ENCODE measurements at regions of chr9 and their contacts with region 1.

Region 1: DNA sequence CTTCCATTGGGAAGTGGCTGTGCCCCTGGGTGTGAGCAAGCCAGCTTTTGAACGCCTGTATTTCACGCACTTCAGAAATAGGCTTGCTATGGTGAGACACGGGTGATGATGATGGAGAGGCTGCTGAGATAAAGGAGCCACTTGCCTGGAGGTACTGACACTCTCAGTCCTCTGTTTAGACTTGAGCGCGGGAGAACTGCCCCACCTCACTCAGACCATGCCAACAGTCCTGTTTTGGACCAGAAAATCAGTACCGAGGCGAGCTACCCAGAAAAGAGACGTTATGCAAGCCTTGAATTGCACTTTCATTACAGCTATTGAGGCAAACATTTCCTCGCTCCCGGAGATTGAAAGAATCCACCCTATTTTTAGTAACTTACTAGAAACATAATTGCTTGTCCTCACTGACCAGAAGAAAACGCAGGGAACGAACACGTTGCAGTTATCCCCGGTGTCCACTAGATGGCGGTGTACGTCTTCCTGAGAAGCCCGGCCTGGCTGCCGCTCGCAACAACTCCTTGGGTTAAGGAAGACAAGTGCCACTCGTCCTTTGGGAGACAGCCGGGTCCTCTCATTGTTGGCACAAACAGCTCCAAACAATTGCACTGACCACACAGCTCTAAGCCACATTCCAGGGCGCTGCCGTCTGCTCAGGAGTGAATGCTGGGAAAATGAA is 142.4 kb downstream of the PSAT1 start:
- DNase-seq: peak; percentile 45 to 56 (median 51)
- H3K4me3 ChIP-seq: no peak overlapping the region
- H3K4me3 Mint-ChIP-seq: peak overlapping the region in 2 of 8 donors; percentile 5 to 22
- H3K27ac ChIP-seq: no peak overlapping the region
- H3K27ac Mint-ChIP-seq: peak overlapping the region in 1 of 7 donors; percentile 44
- H3K4me1 ChIP-seq: peaks cover 5% of the 10 kb centered on the region
- H3K4me1 Mint-ChIP-seq: peaks cover 0 to 12% (median 4%) of the 10 kb centered on the region in 4 donors
- H3K27me3 ChIP-seq: no peaks in the 10 kb centered on the region
- H3K27me3 Mint-ChIP-seq: peaks cover 17 to 25% of the 10 kb centered on the region in 2 donors

Region 2: GRCh38 chr9:78121488-78121887 is 317.8 kb before region 1 on chr9:
- CTCF ChIA-PET with region 1: no interaction called
- POLR2A ChIA-PET with region 1: no interaction called
- intact Hi-C with region 1: no loop called
- DNase-seq: peak in 4 of 5 donors; percentile 44 to 56 (median 48)
- H3K4me3 ChIP-seq: no peak overlapping the region
- H3K4me3 Mint-ChIP-seq: no peak overlapping the region
- H3K27ac ChIP-seq: no peak overlapping the region
- H3K27ac Mint-ChIP-seq: peak overlapping the region; percentile 58 to 82 (median 69)
- H3K4me1 ChIP-seq: peaks cover 36% of the 10 kb centered on the region
- H3K4me1 Mint-ChIP-seq: peaks cover 30 to 53% (median 42%) of the 10 kb centered on the region in 4 donors
- H3K27me3 ChIP-seq: no peaks in the 10 kb centered on the region
- H3K27me3 Mint-ChIP-seq: no peaks in the 10 kb centered on the region

Region 3: DNA sequence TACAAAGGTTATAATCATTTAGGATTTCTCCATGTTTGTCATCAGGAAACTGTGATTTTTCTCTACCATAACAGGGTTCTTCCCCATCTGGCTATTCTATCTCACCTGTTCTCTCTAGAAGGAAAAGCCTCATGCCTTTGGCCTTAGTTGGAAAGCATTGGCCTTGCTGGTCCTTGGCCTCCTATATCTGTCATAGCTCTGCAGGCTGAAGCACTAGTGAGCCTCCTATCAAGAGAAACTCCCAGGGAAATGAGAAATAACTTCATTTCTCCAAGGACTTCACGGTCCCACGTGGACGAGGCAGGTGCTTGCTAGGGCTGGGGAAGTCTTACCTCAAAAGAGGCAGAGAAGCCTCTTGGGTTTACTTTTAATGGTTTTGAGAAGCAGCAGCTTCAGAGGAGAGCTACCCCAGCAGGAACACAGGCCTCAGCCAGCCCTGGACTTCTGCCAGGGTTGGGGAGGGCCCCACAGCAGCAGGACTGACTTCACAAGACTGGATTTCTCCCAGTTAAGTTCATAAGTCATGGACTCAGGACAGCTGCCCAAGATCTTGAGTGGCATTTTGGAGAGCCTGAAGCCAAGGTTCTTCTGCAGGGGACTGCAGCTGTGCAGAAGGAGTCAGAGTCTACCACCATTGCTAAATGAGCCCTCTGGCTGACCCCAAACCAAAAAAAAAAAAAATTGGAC is 158.2 kb before region 1 on chr9:
- CTCF ChIA-PET with region 1: no interaction called
- POLR2A ChIA-PET with region 1: no interaction called
- intact Hi-C with region 1: no loop called
- DNase-seq: no peak
- H3K4me3 ChIP-seq: no peak overlapping the region
- H3K4me3 Mint-ChIP-seq: no peak overlapping the region
- H3K27ac ChIP-seq: no peak overlapping the region
- H3K27ac Mint-ChIP-seq: no peak overlapping the region
- H3K4me1 ChIP-seq: no peaks in the 10 kb centered on the region
- H3K4me1 Mint-ChIP-seq: peaks cover 0 to 1% (median 0%) of the 10 kb centered on the region in 4 donors
- H3K27me3 ChIP-seq: no peaks in the 10 kb centered on the region
- H3K27me3 Mint-ChIP-seq: peaks cover 0 to 2% of the 10 kb centered on the region in 2 donors

Region 4: GRCh38 chr9:78453450-78453849 is 14.1 kb after region 1 on chr9:
- CTCF ChIA-PET with region 1: interaction called, 42 read pairs
- POLR2A ChIA-PET with region 1: no interaction called
- intact Hi-C with region 1: no loop called
- DNase-seq: no peak
- H3K4me3 ChIP-seq: no peak overlapping the region
- H3K4me3 Mint-ChIP-seq: no peak overlapping the region
- H3K27ac ChIP-seq: no peak overlapping the region
- H3K27ac Mint-ChIP-seq: peak overlapping the region in 1 of 7 donors; percentile 82
- H3K4me1 ChIP-seq: no peaks in the 10 kb centered on the region
- H3K4me1 Mint-ChIP-seq: no peaks in the 10 kb centered on the region
- H3K27me3 ChIP-seq: no peaks in the 10 kb centered on the region
- H3K27me3 Mint-ChIP-seq: peaks cover 7 to 15% of the 10 kb centered on the region in 2 donors

Region 5: DNA sequence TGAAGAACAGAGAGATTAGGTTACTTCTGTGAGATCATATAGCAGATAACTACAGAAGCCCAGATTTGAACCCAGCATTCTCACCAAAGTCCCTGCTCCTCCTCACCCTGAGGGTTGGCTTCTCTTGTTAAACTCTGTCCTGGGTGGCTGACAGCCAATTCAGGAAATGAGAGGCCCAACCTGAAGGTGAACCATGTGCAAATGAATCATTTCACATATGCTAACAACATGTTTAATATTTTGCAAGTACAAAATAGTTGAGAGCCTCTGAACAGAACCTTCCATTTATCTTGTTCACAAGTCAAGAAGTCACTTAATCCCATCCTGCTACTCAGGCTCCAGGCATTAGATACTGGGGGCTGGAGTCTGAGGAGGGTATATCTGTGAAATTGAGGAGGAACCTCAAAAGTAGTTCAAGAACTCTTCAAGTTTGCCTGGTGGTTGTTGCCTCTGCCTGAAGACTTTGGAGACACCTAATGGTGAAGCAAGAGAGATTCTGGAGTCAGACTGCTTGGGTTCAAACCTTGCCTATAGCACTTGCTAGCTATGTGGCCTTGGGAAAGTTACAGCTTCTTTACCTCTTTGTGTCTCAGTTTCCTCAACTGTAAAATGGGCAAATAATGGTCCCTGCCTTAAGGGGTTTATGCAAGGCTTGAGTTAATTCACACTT is 421.6 kb after region 1 on chr9:
- CTCF ChIA-PET with region 1: no interaction called
- POLR2A ChIA-PET with region 1: no interaction called
- intact Hi-C with region 1: loop called (anchors 5 kb)
- DNase-seq: no peak
- H3K4me3 ChIP-seq: no peak overlapping the region
- H3K4me3 Mint-ChIP-seq: no peak overlapping the region
- H3K27ac ChIP-seq: no peak overlapping the region
- H3K27ac Mint-ChIP-seq: no peak overlapping the region
- H3K4me1 ChIP-seq: no peaks in the 10 kb centered on the region
- H3K4me1 Mint-ChIP-seq: no peaks in the 10 kb centered on the region
- H3K27me3 ChIP-seq: no peaks in the 10 kb centered on the region
- H3K27me3 Mint-ChIP-seq: no peaks in the 10 kb centered on the region